ENCODE measurements at regions of chr20 and their contacts with region 1.

Region 1: DNA sequence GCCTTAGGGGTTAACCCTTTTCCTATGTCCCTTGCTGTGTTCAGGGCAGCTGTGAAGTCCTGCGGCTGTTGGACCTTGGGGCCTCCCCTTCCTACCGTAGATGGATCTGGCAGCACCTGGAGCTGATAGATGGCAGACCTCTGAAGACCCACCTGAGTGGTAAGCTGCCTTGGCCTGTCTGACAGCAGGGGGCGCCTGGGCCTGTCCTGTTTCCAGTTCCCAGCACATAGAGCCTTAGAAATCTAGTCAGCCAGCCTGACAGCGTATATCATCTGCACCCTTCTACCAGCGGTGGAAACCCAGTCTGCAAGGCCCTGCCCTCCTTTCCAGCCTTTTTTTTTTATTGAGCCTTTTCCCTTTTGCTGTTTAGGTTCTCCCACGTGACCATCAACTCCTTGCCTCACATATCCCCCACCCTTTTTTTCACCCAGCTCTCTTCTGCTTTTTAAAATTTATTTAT is 26.6 kb downstream of the CNBD2 start:
- DNase-seq: peak; percentile 69 to 89
- H3K4me3 ChIP-seq: no peak overlapping the region
- H3K27ac ChIP-seq: no peak overlapping the region
- H3K4me1 ChIP-seq: no peaks in the 10 kb centered on the region
- H3K27me3 ChIP-seq: no peaks in the 10 kb centered on the region
- CTCF ChIP-seq: peak; percentile 88

Region 2: DNA sequence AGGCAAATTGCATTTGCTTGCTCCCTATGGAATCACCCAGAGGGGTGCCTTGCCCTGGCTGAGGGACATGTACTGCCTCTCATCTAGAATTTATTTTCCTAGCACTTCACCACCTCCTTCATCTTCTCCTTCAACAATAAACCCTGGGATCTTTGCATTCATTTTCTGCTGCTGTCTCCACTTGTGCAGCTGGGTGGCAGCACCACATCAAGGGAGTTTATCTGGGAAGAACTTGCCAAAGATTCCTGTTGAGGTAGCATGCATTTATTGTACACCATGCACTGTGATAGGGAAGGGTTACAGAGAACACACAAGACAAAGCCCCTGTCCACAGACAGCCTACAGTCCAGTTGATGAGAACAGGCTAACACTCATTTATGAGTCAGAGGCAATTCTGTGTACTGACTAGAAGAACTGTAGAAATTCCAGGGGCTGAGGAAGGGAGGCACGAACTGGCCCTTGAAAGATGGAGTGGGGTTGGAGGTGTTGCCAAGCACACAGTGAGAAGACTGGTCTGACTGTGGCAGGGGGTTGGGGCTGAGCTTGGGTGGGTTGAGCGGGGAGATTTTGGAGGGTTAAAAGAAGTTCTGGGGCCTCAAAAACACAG is 483.1 kb before region 1 on chr20:
- CTCF ChIA-PET with region 1: no interaction called
- POLR2A ChIA-PET with region 1: no interaction called
- intact Hi-C with region 1: loop called (anchors 5 kb)
- DNase-seq: peak in 1 of 2 experiments; percentile 56
- H3K4me3 ChIP-seq: no peak overlapping the region
- H3K27ac ChIP-seq: no peak overlapping the region
- H3K4me1 ChIP-seq: peaks cover 28% of the 10 kb centered on the region
- H3K27me3 ChIP-seq: no peaks in the 10 kb centered on the region
- CTCF ChIP-seq: peak; percentile 86

Region 3: GRCh38 chr20:36043892-36044515 is 49.0 kb after region 1 on chr20:
- CTCF ChIA-PET with region 1: no interaction called
- POLR2A ChIA-PET with region 1: no interaction called
- intact Hi-C with region 1: loop called (anchors 5 kb)
- DNase-seq: no peak
- H3K4me3 ChIP-seq: no peak overlapping the region
- H3K27ac ChIP-seq: no peak overlapping the region
- H3K4me1 ChIP-seq: peaks cover 17% of the 10 kb centered on the region
- H3K27me3 ChIP-seq: no peaks in the 10 kb centered on the region
- CTCF ChIP-seq: no peak

Region 4: DNA sequence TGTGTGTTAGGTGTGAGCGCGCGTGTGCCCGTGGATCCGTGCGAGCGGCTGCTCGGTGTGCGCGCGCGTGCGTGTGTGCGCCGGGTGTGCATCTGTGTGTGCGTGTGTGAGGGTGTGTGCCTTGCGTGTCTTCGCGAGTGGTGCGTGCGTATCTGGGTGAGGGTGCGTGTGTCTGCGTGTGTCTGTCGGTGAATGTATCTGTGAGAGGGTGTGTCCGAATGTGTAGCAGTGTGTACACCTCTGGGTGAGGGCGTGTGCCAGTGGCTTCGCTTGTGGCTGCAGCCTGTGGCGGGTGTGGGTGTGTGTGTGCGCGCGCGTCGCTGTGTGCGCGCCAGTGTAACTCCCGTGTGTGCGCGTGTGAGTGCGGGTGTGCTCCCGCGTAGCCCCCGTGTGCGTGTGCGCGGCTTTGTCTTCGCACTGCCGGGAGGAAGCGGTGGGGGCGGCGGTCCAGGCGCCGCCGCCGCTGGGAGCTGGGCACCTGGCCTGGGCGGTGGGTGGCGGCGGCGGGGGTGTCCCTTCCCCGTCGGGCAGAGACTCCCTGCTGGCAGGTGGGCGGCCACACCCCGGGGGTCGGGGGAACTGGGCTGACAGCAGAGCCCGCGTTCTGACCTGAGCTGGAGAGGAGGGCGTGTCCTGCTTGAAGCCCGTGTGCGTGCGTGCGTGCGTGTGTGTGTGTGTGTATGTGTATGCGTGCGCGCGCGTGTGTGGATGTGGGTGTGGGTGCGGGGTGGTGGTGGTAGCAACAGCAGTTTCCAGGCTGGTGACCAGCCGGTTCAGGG is 98.2 kb after region 1 on chr20:
- CTCF ChIA-PET with region 1: interaction called, 8 read pairs
- POLR2A ChIA-PET with region 1: interaction called, 5 read pairs
- intact Hi-C with region 1: loop called (anchors 1 kb)
- DNase-seq: peak in 1 of 2 experiments; percentile 54
- H3K4me3 ChIP-seq: peak overlapping the region; percentile 95
- H3K27ac ChIP-seq: no peak overlapping the region
- H3K4me1 ChIP-seq: peaks cover 58% of the 10 kb centered on the region
- H3K27me3 ChIP-seq: no peaks in the 10 kb centered on the region
- CTCF ChIP-seq: no peak

Region 5: DNA sequence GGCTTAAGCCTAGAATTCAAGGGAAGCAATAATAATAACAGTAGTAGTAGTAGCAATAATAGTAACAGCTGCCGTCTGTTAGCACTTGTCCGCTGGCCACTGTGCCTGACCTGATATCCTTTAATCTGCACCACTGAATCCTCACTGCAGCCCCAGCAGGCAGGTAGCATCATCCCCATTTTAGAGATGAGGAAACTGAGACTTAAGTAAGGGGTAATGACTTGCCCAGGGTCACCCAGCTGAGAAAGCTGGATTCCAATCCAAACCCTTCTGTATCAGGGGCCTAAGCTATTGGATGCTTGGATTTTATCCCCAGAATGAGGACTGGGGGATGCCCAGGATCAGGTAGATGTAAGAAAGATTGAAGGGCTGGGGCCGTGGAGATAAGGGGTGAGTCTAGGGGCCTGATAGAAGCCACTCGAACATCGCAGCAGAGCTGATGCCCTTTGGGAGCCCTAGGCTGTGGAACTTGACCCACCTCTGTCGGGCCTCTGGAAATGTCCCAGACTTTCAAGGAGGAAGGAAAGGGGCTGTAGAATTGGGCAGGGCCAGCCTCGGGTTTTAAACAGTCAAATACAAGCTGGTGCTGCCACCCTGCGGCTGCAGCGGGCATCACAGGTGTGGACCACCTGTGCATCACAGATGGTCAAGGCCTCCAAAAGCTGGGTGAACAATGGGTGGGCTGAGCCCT is 444.2 kb after region 1 on chr20:
- CTCF ChIA-PET with region 1: no interaction called
- POLR2A ChIA-PET with region 1: no interaction called
- intact Hi-C with region 1: loop called (anchors 5 kb)
- DNase-seq: peak in 1 of 2 experiments; percentile 76
- H3K4me3 ChIP-seq: no peak overlapping the region
- H3K27ac ChIP-seq: no peak overlapping the region
- H3K4me1 ChIP-seq: no peaks in the 10 kb centered on the region
- H3K27me3 ChIP-seq: no peaks in the 10 kb centered on the region
- CTCF ChIP-seq: peak; percentile 95

Measured in PC-9 (cell line).